Activated T-helper 1 cell treated with anti-CD3 and anti-CD28 coated beads, Interleukin-12 subunit alpha, Interleukin-12 subunit beta, Interleukin-2, Interleukin-4 antibody, amounts not matched to agents 30 ng/mL and 10 ng/mL and 1 ng/mL, durations not matched to agents 14 hours and 24 hours and 36 hours (primary cell): ENCODE measurements at regions of chr5 and their contacts with region 1.

Region 1: GRCh38 chr5:91059409-91059808 is 323.7 kb downstream of the ARRDC3 start:
- DNase-seq: no peak
- H3K4me3 Mint-ChIP-seq: no peak overlapping the region
- H3K27ac Mint-ChIP-seq: no peak overlapping the region
- H3K4me1 Mint-ChIP-seq: peaks cover 19% of the 10 kb centered on the region
- H3K27me3 Mint-ChIP-seq: peaks cover 48% of the 10 kb centered on the region

Region 2: DNA sequence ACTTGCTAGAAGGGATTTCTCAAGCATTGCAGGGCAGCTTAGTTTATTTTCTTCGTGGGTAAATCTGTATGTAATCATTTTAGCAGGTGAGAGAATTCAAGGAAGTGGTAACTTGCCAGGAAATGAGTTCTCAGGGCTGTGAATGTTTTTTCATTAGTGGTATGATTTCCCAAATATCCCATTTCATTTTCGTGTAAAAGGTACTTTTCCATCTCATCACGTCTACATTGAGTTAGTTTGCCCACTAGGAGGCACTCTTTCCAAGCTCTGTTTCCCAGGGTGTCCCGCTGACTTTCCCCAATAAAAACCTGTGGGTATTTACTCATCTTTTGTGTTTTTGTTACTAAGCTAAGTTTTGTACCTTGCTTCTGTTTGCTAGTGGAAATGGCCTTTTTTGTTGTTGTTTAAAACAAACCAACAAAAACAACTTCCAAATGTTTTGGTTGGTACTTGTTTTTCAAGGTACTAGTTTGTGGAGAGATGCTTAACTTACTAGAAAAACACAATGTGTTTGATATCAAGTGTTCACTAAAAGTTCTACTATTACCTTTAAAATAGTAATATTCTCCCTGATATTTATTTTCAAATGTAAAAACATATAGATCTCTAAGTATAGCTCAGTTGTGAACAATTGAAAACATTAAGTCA is 127.2 kb before region 1 on chr5:
- intact Hi-C with region 1: loop called (anchors 5 kb)
- DNase-seq: no peak
- H3K4me3 Mint-ChIP-seq: no peak overlapping the region
- H3K27ac Mint-ChIP-seq: no peak overlapping the region
- H3K4me1 Mint-ChIP-seq: peaks cover 5% of the 10 kb centered on the region
- H3K27me3 Mint-ChIP-seq: peaks cover 6% of the 10 kb centered on the region

Region 3: GRCh38 chr5:91007251-91007650 is 52.2 kb before region 1 on chr5:
- intact Hi-C with region 1: no loop called
- DNase-seq: no peak
- H3K4me3 Mint-ChIP-seq: no peak overlapping the region
- H3K27ac Mint-ChIP-seq: no peak overlapping the region
- H3K4me1 Mint-ChIP-seq: no peaks in the 10 kb centered on the region
- H3K27me3 Mint-ChIP-seq: no peaks in the 10 kb centered on the region

Region 4: DNA sequence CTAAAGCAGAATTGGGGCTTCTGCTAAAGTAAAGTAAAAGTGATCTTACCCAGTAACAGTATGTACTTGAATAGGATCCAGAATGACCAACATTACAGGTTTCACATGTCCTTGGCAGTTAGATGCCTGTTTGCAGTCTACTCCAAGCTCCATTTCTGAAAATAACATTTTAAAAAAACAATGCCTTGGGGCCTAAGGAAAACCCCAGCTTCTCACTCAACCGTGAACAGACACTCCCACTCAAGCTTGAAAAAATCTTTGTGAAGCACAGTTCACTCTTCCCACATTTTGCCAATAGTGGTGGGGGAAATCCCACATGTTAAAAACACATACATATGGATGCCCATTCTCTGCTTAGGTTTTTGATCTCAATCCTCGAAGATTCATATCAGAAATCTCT is 19.6 kb after region 1 on chr5:
- intact Hi-C with region 1: loop called (anchors 1 kb)
- DNase-seq: no peak
- H3K4me3 Mint-ChIP-seq: no peak overlapping the region
- H3K27ac Mint-ChIP-seq: no peak overlapping the region
- H3K4me1 Mint-ChIP-seq: peaks cover 8% of the 10 kb centered on the region
- H3K27me3 Mint-ChIP-seq: peaks cover 3% of the 10 kb centered on the region